Ascending aorta (tissue), 2 donors: ENCODE measurements at regions of chr9 and their contacts with region 1.

Region 1: GRCh38 chr9:5437254-5438216 is at the start of gene PLGRKT:
- DNase-seq: peak; percentile 85 to 98
- H3K4me3 ChIP-seq: peak within 1 kb of the TSS; percentile 75 to 77
- H3K27ac ChIP-seq: peak within 1 kb of the TSS; percentile 91 to 93
- H3K4me1 ChIP-seq: peaks cover 0 to 9% of the 10 kb centered on the region in 2 donors
- H3K27me3 ChIP-seq: no peaks in the 10 kb centered on the region
- CTCF ChIP-seq: peak in 2 of 3 experiments; percentile 25 to 39
- total RNA-seq, gene PLGRKT: not detected

Region 2: DNA sequence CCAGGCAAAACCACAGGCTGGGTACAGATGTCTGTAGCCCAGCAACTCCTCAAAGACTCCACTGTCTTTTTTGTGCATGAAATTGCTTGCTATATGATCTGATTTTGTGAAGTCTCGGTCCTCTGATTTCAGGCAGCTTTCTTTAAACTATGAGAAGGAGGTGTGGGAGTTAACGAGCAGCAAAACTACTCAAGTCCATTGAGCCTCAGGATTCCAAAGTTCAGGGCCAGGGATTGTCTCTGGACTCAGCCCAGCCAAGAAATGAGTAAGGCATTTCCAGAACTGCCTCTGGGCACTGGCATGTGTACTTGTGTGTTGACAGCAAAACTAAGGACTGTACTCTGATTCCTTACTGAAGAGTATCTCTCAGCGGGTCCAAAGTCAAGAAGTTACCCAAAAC is 1084.3 kb before region 1 on chr9:
- intact Hi-C with region 1: no loop called
- DNase-seq: no peak
- H3K4me3 ChIP-seq: no peak overlapping the region
- H3K27ac ChIP-seq: no peak overlapping the region
- H3K4me1 ChIP-seq: no peaks in the 10 kb centered on the region
- H3K27me3 ChIP-seq: no peaks in the 10 kb centered on the region
- CTCF ChIP-seq: no peak

Region 3: DNA sequence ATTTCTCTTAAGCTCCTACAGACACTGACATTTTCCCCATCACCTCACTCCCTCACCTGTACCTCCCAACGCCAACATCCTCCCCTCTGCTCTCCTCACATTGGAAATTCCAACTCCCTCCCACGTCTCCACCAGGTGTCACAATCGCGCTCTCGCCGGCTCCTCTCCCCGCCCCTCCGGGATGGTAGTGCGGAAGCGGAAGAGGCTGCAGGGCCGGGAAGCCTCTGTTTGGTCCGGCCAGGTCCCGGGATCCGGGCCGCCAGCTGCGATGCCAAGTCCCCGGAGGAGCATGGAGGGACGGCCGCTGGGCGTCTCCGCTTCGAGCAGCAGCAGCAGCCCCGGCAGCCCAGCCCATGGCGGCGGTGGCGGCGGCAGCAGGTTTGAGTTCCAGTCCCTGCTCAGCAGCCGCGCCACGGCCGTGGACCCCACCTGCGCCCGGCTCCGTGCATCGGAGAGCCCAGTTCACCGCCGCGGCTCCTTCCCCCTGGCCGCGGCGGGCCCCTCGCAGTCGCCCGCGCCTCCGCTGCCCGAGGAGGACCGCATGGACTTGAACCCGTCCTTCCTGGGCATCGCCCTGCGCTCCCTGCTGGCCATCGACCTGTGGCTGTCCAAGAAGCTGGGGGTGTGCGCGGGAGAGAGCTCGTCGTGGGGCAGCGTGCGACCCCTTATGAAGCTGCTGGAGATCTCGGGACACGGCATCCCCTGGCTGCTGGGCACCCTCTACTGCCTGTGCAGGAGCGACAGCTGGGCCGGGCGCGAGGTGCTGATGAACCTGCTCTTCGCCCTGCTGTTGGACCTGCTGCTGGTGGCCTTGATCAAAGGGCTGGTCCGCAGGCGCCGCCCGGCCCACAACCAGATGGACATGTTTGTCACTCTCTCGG is 775.2 kb before region 1 on chr9 and contains the start of gene PLPP6:
- intact Hi-C with region 1: loop called (anchors 5 kb)
- DNase-seq: peak; percentile 59 to 95
- H3K4me3 ChIP-seq: peak within 1 kb of the TSS; percentile 66 to 86
- H3K27ac ChIP-seq: peak within 1 kb of the TSS; percentile 82 to 87
- H3K4me1 ChIP-seq: peaks cover 7 to 16% of the 10 kb centered on the region in 2 donors
- H3K27me3 ChIP-seq: no peaks in the 10 kb centered on the region
- CTCF ChIP-seq: peak; percentile 33 to 67 (median 45)
- total RNA-seq, gene PLPP6: 19.2 TPM

Region 4: DNA sequence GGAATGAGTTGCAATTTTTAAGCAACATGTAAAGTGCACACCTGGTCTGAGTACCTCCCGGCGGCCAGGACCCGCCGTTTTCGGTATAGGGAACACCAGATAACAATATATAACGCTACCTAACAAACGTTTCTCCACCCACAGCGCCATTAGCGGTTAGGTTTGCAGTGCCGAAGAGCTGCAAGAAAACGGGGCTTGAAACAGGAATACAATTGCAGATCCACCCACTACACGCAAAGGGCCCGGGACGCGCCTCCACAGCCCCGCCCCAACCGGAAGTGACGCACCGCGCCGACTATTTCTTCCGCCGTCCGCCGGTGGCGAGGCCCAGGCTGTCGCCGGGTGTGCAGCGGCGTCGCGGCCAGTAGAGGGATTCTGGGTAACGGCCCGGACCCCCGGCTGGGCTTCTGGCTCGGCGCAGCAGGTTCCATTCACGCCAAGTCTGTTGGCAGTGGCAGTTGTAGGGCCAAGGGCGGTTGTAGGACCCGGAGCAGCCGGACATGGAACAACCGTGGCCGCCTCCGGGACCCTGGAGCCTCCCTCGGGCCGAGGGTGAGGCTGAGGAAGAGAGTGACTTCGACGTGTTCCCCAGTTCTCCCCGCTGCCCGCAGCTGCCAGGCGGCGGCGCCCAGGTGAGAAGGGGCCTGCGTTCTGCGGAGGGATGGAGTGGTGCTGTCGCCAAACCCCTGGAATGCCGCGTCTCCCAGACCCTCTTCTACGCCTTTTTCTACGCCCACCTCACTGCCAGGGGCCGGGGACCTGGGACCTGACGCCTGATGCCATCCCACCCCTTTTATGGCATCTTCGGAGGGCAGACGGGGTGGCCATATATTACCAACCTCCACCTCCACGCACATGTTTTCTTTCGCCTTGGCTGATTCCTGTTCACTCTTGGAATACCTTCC is 758.0 kb before region 1 on chr9 and contains the start of gene CDC37L1:
- intact Hi-C with region 1: loop called (anchors 5 kb)
- DNase-seq: peak; percentile 87 to 99
- H3K4me3 ChIP-seq: peak within 1 kb of the TSS; percentile 79 to 91
- H3K27ac ChIP-seq: peak within 1 kb of the TSS; percentile 97 to 98
- H3K4me1 ChIP-seq: peaks cover 0 to 16% of the 10 kb centered on the region in 2 donors
- H3K27me3 ChIP-seq: no peaks in the 10 kb centered on the region
- CTCF ChIP-seq: peak; percentile 61 to 76 (median 76)
- total RNA-seq, gene CDC37L1: 17.2 TPM

Region 5: DNA sequence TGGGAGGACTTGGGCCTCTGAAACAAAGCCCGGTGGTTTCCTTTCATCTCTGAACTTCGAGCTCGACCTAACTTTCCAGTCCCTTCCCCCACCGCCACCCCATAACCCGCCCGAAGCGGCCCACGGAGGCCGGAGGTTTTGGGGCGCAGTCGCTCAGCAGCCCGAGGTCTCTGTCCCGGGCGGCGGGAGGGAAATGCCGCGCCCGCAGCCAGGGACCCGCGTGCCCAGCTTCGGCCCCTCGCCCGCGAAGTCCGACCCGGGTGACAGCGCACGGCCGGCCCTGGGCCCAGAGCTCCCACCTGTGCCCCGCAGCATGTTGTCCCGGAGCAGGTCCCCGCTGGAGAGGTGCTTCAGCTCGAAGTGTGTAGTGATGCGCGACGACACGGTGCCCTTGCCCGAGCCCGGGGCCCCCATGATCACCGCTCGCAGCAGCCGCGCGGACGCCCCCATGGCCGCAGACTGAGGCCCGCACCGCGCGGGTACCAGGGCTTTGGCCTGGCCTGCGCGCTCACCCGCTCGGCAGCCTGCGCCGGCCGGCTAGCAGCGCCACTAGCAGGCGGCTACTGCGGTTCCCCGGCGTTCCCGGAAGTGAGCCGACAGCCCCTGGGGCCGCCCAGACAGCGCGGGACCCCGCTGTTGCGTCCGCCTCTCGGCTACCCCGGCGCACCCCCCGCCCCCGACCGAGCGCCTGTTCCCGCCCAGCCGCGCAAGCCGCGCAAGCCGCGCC is 696.7 kb before region 1 on chr9 and contains the start of gene AK3:
- intact Hi-C with region 1: loop called (anchors 5 kb)
- DNase-seq: peak; percentile 29 to 92
- H3K4me3 ChIP-seq: peak within 1 kb of the TSS; percentile 76 to 88
- H3K27ac ChIP-seq: peak within 1 kb of the TSS; percentile 86 to 87
- H3K4me1 ChIP-seq: peaks cover 3 to 17% of the 10 kb centered on the region in 2 donors
- H3K27me3 ChIP-seq: no peaks in the 10 kb centered on the region
- CTCF ChIP-seq: peak in 2 of 3 experiments; percentile 18 to 41
- total RNA-seq, gene AK3: 37.1 TPM

Region 6: GRCh38 chr9:4750023-4750673 is 687.4 kb before region 1 on chr9:
- intact Hi-C with region 1: loop called (anchors 5 kb)
- DNase-seq: no peak
- H3K4me3 ChIP-seq: no peak overlapping the region
- H3K27ac ChIP-seq: no peak overlapping the region
- H3K4me1 ChIP-seq: no peaks in the 10 kb centered on the region
- H3K27me3 ChIP-seq: no peaks in the 10 kb centered on the region
- CTCF ChIP-seq: peak; percentile 41 to 67 (median 67)

Region 7: DNA sequence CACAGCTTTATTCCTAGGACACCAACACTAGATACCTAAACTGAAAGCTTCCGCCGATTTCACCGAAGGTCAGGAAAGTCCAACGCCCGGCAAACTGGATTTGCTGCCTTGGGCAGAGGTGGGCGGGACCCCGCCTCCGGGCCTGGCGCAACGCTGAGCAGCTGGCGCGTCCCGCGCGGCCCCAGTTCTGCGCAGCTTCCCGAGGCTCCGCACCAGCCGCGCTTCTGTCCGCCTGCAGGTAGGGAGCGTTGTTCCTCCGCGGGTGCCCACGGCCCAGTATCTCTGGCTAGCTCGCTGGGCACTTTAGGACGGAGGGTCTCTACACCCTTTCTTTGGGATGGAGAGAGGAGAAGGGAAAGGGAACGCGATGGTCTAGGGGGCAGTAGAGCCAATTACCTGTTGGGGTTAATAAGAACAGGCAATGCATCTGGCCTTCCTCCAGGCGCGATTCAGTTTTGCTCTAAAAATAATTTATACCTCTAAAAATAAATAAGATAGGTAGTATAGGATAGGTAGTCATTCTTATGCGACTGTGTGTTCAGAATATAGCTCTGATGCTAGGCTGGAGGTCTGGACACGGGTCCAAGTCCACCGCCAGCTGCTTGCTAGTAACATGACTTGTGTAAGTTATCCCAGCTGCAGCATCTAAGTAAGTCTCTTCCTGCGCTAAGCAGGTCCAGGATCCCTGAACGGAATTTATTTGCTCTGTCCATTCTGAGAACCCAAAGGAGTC is 13.0 kb after region 1 on chr9 and contains the start of gene CD274:
- intact Hi-C with region 1: loop called (anchors 1 kb)
- DNase-seq: peak; percentile 56 to 94
- H3K4me3 ChIP-seq: peak within 1 kb of the TSS; percentile 60 to 72
- H3K27ac ChIP-seq: peak within 1 kb of the TSS; percentile 79 to 80
- H3K4me1 ChIP-seq: peaks cover 3 to 30% of the 10 kb centered on the region in 2 donors
- H3K27me3 ChIP-seq: no peaks in the 10 kb centered on the region
- CTCF ChIP-seq: peak; percentile 67 to 85 (median 80)
- total RNA-seq, gene CD274: 23.8 TPM

Region 8: DNA sequence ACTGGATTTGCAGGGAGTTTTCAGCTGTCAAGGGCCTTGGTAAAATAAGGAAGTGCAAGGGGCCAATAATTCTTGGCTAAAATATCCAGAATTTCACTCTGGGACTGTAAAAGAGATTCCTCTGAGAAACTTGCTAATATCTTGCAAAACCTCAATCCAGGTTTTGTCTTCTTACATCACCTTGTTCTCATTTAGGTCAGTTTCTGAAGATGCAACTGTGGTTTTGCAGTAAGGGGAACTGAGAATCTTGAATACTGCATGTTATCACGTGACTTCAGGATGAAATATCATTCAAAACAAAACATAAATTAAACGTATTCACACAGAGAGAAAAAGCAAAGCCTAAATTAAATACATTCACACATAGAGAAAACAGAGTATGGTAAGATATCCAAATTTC is 156.4 kb after region 1 on chr9:
- intact Hi-C with region 1: loop called (anchors 5 kb)
- DNase-seq: no peak
- H3K4me3 ChIP-seq: no peak overlapping the region
- H3K27ac ChIP-seq: no peak overlapping the region
- H3K4me1 ChIP-seq: peaks cover 0 to 8% of the 10 kb centered on the region in 2 donors
- H3K27me3 ChIP-seq: no peaks in the 10 kb centered on the region
- CTCF ChIP-seq: no peak